ENCODE measurements at regions of chr15 and their contacts with region 1.

Region 1: DNA sequence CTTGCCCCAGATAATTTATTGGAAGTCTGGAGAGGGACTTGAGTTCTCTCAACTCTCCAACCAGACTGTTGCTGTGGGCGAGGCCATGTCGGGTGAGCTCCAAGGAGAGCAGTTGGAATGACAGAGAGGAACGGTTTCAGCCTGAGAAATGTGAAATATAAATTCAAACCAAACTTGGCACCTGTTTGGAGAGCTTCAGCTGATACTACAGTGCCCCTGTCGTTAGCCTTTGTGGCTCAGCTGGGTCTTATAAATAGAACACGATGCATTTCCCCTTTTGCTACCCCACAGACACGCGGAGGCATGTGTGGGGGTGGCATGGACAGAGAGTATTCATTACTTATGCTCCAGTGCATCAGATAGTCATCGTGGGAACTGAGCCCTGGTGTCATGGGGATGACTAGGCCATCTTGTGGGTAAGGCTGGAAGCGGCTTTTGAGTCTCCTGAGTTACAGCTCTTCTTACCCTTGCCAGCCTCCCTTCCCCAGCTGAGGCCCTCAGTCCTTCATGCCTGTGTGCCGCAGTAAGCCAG is 15.6 kb downstream of the SMAD3 start:
- DNase-seq: peak in 2 of 5 donors; percentile 32 to 71
- H3K4me3 ChIP-seq: no peak overlapping the region
- H3K4me3 Mint-ChIP-seq: peak overlapping the region in 7 of 8 donors; percentile 37 to 93 (median 72)
- H3K27ac ChIP-seq: peak overlapping the region; percentile 58
- H3K27ac Mint-ChIP-seq: peak overlapping the region; percentile 92 to 98 (median 95)
- H3K4me1 ChIP-seq: peaks cover 99% of the 10 kb centered on the region
- H3K4me1 Mint-ChIP-seq: peaks cover 79 to 98% (median 92%) of the 10 kb centered on the region in 4 donors
- H3K27me3 ChIP-seq: no peaks in the 10 kb centered on the region
- H3K27me3 Mint-ChIP-seq: no peaks in the 10 kb centered on the region

Region 2: DNA sequence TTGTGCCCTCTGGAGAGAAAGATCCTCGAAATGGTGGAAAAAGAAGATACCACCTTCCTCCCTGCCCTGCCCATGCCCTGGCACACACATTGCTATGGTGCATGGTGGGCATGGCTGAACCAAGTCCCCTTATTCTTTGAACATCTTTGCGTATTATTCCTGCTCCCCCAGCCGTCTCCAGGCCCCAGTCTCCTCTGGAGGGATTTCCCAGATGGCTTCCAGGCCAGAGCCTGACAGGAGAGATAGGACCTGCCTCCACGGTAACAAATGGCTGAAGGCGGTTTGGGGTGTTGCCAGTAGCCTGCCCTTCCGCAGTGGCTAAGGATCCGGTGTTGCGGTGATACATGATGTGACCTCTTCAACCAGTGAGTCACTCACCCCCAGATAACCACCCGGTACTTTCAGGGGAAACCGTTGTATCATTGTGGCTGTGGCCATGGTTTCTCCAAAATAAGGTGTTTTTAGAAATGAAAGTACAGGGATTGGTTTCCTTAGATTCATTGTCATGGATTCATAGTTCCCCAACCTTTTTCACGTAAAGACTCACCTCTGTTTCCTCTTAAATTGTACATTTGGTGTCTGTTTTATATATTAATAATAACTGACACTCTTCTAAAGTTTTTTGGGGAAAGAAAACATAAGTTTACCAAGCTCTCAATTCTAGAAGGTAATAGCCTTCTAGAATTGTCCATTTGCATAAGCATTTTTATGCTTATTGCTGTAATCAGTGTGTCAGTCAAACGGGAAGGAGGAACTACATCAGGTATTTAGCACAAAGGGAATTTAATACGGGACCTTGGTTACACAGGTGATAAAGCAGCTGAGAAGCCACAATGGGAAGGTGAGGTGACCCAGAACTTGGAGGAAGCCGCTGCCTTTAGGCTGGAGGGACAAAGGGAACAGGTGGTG is 10.4 kb after region 1 on chr15:
- CTCF ChIA-PET with region 1: interaction called, 13 read pairs
- POLR2A ChIA-PET with region 1: interaction called, 382 read pairs
- intact Hi-C with region 1: loop called (anchors 1 kb)
- DNase-seq: peak; percentile 69 to 91 (median 78)
- H3K4me3 ChIP-seq: peak overlapping the region; percentile 21 to 36
- H3K4me3 Mint-ChIP-seq: peak overlapping the region; percentile 73 to 90 (median 82)
- H3K27ac ChIP-seq: peak overlapping the region; percentile 67
- H3K27ac Mint-ChIP-seq: peak overlapping the region in 6 of 7 donors; percentile 93 to 99 (median 96)
- H3K4me1 ChIP-seq: peaks cover 100% of the 10 kb centered on the region
- H3K4me1 Mint-ChIP-seq: peaks cover 65 to 100% (median 89%) of the 10 kb centered on the region in 4 donors
- H3K27me3 ChIP-seq: no peaks in the 10 kb centered on the region
- H3K27me3 Mint-ChIP-seq: no peaks in the 10 kb centered on the region

Region 3: GRCh38 chr15:67109141-67110034 is 28.4 kb after region 1 on chr15:
- CTCF ChIA-PET with region 1: interaction called, 4 read pairs
- POLR2A ChIA-PET with region 1: interaction called, 382 read pairs
- intact Hi-C with region 1: no loop called
- DNase-seq: no peak
- H3K4me3 ChIP-seq: no peak overlapping the region
- H3K4me3 Mint-ChIP-seq: peak overlapping the region in 6 of 8 donors; percentile 12 to 66 (median 32)
- H3K27ac ChIP-seq: no peak overlapping the region
- H3K27ac Mint-ChIP-seq: peak overlapping the region in 5 of 7 donors; percentile 29 to 87 (median 80)
- H3K4me1 ChIP-seq: peaks cover 85% of the 10 kb centered on the region
- H3K4me1 Mint-ChIP-seq: peaks cover 18 to 71% (median 34%) of the 10 kb centered on the region in 4 donors
- H3K27me3 ChIP-seq: no peaks in the 10 kb centered on the region
- H3K27me3 Mint-ChIP-seq: no peaks in the 10 kb centered on the region

Region 4: DNA sequence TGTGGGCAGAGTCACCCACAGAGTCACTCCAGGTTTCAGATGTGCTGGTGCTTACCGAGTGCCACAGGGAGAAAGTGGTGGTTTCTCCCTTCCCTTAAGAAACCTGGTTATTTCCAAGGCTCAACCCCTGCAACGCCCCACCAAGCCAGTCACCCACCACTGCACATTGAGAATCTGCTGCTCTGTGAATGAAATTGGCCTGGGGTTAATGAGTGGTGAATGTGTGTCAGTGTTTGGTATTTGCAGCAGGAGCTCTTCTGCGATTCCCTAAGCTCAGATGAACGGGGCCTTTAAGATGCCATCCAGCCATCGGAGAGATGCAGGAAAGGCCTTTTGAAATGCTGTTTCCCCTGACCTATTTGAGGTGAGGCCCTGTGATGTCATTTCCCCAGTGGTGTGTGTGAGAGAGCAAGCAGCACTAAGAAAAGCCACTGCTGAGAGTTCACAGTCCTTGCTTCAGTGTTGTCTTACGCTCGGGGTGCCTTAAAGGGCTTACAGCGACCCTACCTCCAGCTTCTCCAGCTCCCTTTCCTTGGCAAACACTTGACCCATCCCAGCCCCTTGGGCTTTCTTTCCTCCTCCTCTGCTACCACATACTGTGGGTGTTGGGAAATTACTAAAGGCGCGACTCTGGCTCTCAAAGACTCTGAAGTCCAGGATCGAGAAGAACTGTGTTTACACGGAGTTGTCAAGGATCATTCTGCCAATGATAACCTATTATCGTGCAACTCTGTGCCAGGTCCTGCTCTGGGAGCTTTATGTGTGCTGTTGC is 53.3 kb after region 1 on chr15:
- CTCF ChIA-PET with region 1: interaction called, 5 read pairs
- POLR2A ChIA-PET with region 1: interaction called, 3 read pairs
- intact Hi-C with region 1: loop called (anchors 5 kb)
- DNase-seq: peak; percentile 81 to 92 (median 85)
- H3K4me3 ChIP-seq: peak overlapping the region; percentile 48 to 73
- H3K4me3 Mint-ChIP-seq: peak overlapping the region; percentile 86 to 97 (median 90)
- H3K27ac ChIP-seq: peak overlapping the region; percentile 85
- H3K27ac Mint-ChIP-seq: peak overlapping the region; percentile 97 to 100 (median 99)
- H3K4me1 ChIP-seq: peaks cover 99% of the 10 kb centered on the region
- H3K4me1 Mint-ChIP-seq: peaks cover 75 to 98% (median 88%) of the 10 kb centered on the region in 4 donors
- H3K27me3 ChIP-seq: no peaks in the 10 kb centered on the region
- H3K27me3 Mint-ChIP-seq: no peaks in the 10 kb centered on the region

Measured in CD4-positive, alpha-beta memory T cell (primary cell).